ENCODE measurements at regions of chr10 and their contacts with region 1.

Region 1: DNA sequence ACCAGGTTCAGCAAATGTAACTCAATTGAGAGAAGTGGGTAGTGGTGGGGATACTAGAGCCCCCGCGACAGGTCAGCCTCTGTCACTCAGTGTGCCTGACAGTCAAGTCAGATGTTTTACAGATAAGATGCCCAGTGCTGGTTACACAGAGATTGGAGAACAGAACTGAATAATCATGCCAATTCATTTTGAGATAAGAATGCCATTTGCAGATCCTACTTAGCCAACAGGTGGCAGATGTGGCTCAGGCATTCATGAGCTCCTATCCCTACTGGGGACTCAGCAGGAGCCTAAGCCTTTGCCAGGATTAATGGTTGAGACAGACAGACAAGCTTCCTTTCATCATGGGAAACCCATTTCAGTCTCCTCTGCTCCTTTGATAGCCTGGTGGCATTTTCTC is 137.8 kb downstream of the MAPK8 start:
- DNase-seq: peak; percentile 90
- H3K4me3 ChIP-seq: no peak overlapping the region
- H3K27ac ChIP-seq: no peak overlapping the region
- H3K4me1 ChIP-seq: peaks cover 18% of the 10 kb centered on the region
- H3K27me3 ChIP-seq: no peaks in the 10 kb centered on the region
- CTCF ChIP-seq: peak; percentile 64

Region 2: GRCh38 chr10:48506147-48506917 is 62.1 kb after region 1 on chr10:
- CTCF ChIA-PET with region 1: interaction called, 8 read pairs
- POLR2A ChIA-PET with region 1: no interaction called
- intact Hi-C with region 1: loop called (anchors 2 kb)
- DNase-seq: peak; percentile 66
- H3K4me3 ChIP-seq: no peak overlapping the region
- H3K27ac ChIP-seq: no peak overlapping the region
- H3K4me1 ChIP-seq: no peaks in the 10 kb centered on the region
- H3K27me3 ChIP-seq: no peaks in the 10 kb centered on the region
- CTCF ChIP-seq: peak; percentile 53

Measured in A673 (cell line).